WTC11 (cell line): ENCODE measurements at regions of chr3 and their contacts with region 1.

Region 1: DNA sequence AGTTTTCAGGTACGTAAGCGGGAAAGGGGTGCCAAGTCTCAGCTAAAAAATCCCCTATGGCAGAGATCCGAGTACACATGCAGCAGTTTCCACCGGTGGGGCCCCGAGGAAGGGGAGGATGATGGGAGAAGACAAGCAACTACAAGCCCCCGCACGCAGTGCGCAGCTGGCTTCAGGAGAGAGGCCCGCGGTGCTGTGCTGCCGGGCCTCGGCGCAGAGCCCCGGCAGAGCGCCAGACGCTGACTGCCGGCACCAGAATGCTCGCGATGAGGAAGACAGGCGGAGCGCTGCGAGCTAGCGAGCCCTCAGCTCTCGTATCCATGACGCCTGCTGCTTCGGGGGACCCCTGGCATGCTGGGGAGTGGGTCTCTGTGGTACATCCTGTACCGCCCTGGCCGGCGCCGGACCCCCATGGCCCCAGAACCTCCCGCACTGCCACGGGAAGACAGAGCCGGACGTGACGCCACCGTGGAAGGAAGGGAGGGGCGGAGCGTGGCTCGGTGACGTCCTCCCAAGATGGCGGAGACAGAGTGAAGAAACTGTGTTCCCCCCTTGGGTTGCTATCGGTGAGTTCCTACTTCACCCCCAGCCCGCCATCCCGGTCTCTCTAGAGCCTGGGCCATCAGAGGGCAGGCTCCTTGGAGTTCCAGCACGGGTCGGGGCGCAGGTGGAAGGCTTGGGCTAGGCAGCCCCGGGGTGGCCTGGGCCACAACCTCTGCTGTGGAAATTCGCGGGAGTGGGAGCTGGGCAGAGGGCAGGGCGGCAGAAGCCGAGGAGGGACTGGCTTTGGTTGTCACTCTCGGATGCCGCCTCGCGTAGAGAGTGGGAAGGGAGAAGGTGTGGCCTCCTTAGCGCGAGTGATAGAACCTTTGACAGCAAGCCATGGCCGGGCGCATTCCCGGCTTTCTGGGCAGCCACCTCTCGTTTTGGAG is at the start of gene MYNN:
- DNase-seq: peak; percentile 90
- ATAC-seq: peak; percentile 78
- H3K4me3 Mint-ChIP-seq: peak within 1 kb of the TSS; percentile 98
- H3K27ac Mint-ChIP-seq: peak within 1 kb of the TSS; percentile 100
- H3K4me1 Mint-ChIP-seq: peaks cover 35% of the 10 kb centered on the region
- H3K27me3 Mint-ChIP-seq: no peaks in the 10 kb centered on the region; the same call in 1 of the 2 replicates
- CTCF ChIP-seq: no peak
- total RNA-seq, gene MYNN: 14.3 to 14.5 TPM (median 14.3 TPM) in 3 replicates

Region 2: DNA sequence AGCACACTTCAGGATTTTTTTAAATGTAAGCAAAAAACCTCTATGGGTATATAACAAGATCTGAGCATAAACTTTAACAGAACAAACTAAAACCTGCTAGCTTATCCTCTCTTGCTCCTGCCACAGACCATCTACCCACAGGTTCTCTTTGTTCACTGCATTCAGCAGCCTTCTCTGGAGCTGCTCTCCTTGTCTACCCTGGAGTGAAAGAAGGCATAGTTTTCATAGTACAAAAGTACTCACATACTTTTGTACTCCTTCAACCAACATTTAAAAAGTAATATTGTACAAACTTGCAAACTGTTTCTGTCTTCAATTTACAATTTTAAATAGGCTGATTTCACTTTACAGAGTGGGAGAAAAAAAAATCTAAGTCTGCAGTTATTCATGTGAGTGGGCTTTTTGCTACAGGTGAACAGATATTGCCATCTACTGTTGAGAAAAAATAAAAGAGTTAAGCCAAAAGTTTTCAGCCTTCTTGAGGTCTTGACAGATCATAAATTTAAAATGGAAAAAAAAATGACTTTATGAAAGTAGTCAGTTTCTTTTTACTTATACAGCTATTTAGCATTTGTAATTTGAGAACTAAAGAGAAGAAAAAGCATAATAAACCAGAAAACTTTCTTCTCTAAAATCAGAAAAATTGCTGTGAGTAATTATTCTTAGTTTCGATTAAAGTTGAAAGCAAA is 28.7 kb before region 1 on chr3:
- CTCF ChIA-PET with region 1: no interaction called
- POLR2A ChIA-PET with region 1: no interaction called
- DNase-seq: no peak
- ATAC-seq: peak; percentile 89
- H3K4me3 Mint-ChIP-seq: no peak overlapping the region
- H3K27ac Mint-ChIP-seq: no peak overlapping the region
- H3K4me1 Mint-ChIP-seq: peaks cover 29% of the 10 kb centered on the region
- H3K27me3 Mint-ChIP-seq: no peaks in the 10 kb centered on the region
- CTCF ChIP-seq: no peak; the same call in 1 of the 2 replicates

Region 3: GRCh38 chr3:170021083-170021482 is 247.9 kb after region 1 on chr3:
- CTCF ChIA-PET with region 1: interaction called, 3 read pairs
- POLR2A ChIA-PET with region 1: interaction called, 12 read pairs
- DNase-seq: no peak
- ATAC-seq: peak; percentile 77
- H3K4me3 Mint-ChIP-seq: no peak overlapping the region
- H3K27ac Mint-ChIP-seq: no peak overlapping the region
- H3K4me1 Mint-ChIP-seq: no peaks in the 10 kb centered on the region
- H3K27me3 Mint-ChIP-seq: no peaks in the 10 kb centered on the region
- CTCF ChIP-seq: no peak